ENCODE measurements at regions of chr9 and their contacts with region 1.

Region 1: GRCh38 chr9:137034863-137035761 is 3.2 kb upstream of the FUT7 start:
- DNase-seq: peak; percentile 68
- H3K4me3 ChIP-seq: no peak overlapping the region
- H3K27ac ChIP-seq: peak overlapping the region in 1 of 2 donors; percentile 45
- H3K4me1 ChIP-seq: peaks cover 8% of the 10 kb centered on the region
- H3K27me3 ChIP-seq: no peaks in the 10 kb centered on the region
- CTCF ChIP-seq: peak; percentile 74 to 94 (median 90)
- POLR2A ChIP-seq: no peak

Region 2: DNA sequence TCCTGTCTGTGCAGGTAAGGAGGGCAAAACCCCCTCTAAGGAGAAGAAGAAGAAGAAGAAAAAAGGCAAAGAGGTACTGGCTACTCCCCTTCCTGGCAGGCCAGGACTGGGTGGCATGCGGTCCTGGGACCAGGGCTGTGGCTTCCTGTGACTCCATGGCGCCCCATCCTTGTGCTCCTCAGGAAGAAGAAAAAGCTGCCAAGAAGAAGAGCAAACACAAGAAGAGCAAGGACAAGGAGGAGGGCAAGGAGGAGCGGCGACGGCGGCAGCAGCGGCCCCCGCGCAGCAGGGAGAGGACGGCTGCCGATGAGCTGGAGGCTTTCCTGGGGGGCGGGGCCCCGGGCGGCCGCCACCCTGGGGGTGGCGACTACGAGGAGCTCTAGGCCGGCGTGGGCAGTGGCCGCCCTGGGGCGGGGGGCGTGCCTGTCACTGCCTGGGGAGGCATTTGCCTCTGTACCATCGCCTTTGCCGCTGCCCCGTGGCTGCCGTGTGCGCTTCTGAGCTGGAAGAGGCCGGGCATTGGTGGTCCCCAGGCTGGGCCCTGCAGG is 194.9 kb before region 1 on chr9:
- intact Hi-C with region 1: loop called (anchors 5 kb)
- DNase-seq: no peak
- H3K4me3 ChIP-seq: no peak overlapping the region
- H3K27ac ChIP-seq: peak overlapping the region; percentile 36 to 55
- H3K4me1 ChIP-seq: peaks cover 13% of the 10 kb centered on the region
- H3K27me3 ChIP-seq: no peaks in the 10 kb centered on the region
- CTCF ChIP-seq: no peak
- POLR2A ChIP-seq: no peak

Region 3: DNA sequence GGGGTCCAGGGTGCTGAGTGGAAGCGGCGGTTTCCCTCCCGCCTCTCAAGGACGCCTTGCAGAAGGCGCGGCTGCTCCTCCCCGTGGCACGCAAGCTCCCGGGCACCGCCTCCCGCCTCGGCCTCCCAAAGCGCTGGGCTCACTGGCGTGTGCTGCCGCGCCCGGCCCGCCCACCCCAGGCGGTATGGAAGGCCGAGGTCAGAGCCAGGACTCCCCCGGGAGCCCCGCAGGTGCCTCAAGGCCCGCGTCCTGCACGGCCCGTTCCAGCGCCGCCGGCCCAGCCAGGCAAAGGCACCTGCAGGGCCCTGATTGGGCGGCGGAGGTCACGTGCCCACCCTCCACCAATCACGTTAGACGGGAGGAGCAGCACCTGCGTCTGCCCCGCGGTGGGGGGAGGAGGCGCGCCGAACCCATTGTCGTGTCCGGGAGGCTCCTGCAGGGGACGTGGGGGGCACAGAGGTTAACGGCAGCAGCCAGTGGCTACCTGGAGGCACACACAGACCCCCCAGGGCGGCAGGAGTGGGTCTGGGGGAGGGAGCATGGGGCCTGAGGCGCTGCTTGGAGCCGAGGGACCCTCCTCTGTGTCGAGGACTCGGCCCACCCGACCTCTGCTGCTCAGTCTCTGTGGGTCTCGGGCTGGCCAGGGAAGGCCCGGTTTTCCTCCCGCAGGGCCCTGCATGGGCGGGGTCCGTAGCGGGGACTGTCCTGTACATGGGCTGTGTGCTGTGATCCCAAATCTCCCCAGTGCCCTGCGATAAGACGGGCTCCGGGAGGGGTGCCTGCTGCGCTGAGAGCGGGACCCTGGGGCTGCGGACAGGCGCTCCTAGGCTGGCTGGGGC is 85.1 kb before region 1 on chr9:
- intact Hi-C with region 1: loop called (anchors 5 kb)
- DNase-seq: peak; percentile 95
- H3K4me3 ChIP-seq: peak overlapping the region; percentile 58 to 61
- H3K27ac ChIP-seq: peak overlapping the region; percentile 83 to 86
- H3K4me1 ChIP-seq: no peaks in the 10 kb centered on the region
- H3K27me3 ChIP-seq: no peaks in the 10 kb centered on the region
- CTCF ChIP-seq: peak in 3 of 4 experiments; percentile 10 to 55 (median 55)
- POLR2A ChIP-seq: peak; percentile 86